ENCODE measurements at regions of chr4 and their contacts with region 1.

Region 1: GRCh38 chr4:109433205-109434006 is at the start of gene SEC24B:
- DNase-seq: peak; percentile 91
- H3K4me3 ChIP-seq: peak within 1 kb of the TSS; percentile 62
- H3K27ac ChIP-seq: peak within 1 kb of the TSS; percentile 91
- H3K4me1 ChIP-seq: peaks cover 29% of the 10 kb centered on the region
- H3K27me3 ChIP-seq: no peaks in the 10 kb centered on the region
- CTCF ChIP-seq: peak; percentile 69
- total RNA-seq, gene SEC24B: 39.3 and 39.6 TPM in 2 replicates

Region 2: GRCh38 chr4:109574102-109574850 is 140.9 kb after region 1 on chr4:
- CTCF ChIA-PET with region 1: no interaction called
- POLR2A ChIA-PET with region 1: no interaction called
- intact Hi-C with region 1: loop called (anchors 5 kb)
- DNase-seq: peak; percentile 57
- H3K4me3 ChIP-seq: no peak overlapping the region
- H3K27ac ChIP-seq: no peak overlapping the region
- H3K4me1 ChIP-seq: peaks cover 27% of the 10 kb centered on the region
- H3K27me3 ChIP-seq: no peaks in the 10 kb centered on the region
- CTCF ChIP-seq: peak; percentile 39; the same call in 1 of the 2 replicates

Measured in A673 (cell line).